CD4-positive, alpha-beta memory T cell (primary cell): ENCODE measurements at regions of chr11 and their contacts with region 1.

Region 1: GRCh38 chr11:2975594-2975993 is 16.5 kb downstream of the NAP1L4 start:
- DNase-seq: peak; percentile 47 to 63 (median 49)
- H3K4me3 ChIP-seq: no peak overlapping the region
- H3K4me3 Mint-ChIP-seq: no peak overlapping the region
- H3K27ac ChIP-seq: no peak overlapping the region
- H3K27ac Mint-ChIP-seq: peak overlapping the region in 3 of 7 donors; percentile 30 to 69 (median 51)
- H3K4me1 ChIP-seq: peaks cover 12% of the 10 kb centered on the region
- H3K4me1 Mint-ChIP-seq: peaks cover 21 to 44% (median 36%) of the 10 kb centered on the region in 4 donors
- H3K27me3 ChIP-seq: no peaks in the 10 kb centered on the region
- H3K27me3 Mint-ChIP-seq: no peaks in the 10 kb centered on the region

Region 2: DNA sequence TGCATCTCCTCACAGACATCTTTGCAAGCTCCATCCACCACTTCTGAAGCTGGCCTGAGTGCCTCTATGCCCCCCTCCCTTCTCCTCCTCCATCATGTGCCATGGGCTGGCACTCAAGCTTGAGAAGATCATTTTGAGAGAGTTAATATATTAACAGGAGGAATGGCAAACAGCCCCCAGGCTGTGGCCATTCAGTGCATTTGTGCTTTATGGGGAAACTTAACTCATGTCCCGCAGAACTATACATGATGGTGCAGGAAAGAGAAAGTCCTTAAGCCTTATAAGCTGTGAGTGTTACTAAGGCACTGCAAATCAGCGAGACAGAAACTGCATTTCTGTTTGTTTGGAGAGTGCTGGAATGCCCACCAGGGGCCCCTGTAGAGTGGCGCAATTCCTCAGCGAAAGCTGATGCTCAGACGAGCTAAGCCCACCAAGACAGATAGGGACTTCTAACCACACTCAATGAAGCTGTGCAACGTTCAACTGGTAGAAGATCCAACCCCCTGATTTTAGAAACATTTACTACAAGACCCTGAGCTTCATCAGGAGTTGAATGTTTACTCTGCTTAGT is 19.6 kb before region 1 on chr11:
- CTCF ChIA-PET with region 1: interaction called, 19 read pairs
- POLR2A ChIA-PET with region 1: interaction called, 3 read pairs
- intact Hi-C with region 1: no loop called
- DNase-seq: no peak
- H3K4me3 ChIP-seq: no peak overlapping the region
- H3K4me3 Mint-ChIP-seq: no peak overlapping the region
- H3K27ac ChIP-seq: no peak overlapping the region
- H3K27ac Mint-ChIP-seq: peak overlapping the region in 1 of 7 donors; percentile 31
- H3K4me1 ChIP-seq: peaks cover 18% of the 10 kb centered on the region
- H3K4me1 Mint-ChIP-seq: peaks cover 10 to 29% (median 19%) of the 10 kb centered on the region in 4 donors
- H3K27me3 ChIP-seq: no peaks in the 10 kb centered on the region
- H3K27me3 Mint-ChIP-seq: no peaks in the 10 kb centered on the region